HepG2 (cell line): ENCODE measurements at regions of chr2 and their contacts with region 1.

Region 1: GRCh38 chr2:80132281-80132680 is 172.3 kb downstream of the LRRTM1 start:
- DNase-seq: no peak
- ATAC-seq: no peak
- H3K4me3 ChIP-seq: no peak overlapping the region
- H3K27ac ChIP-seq: no peak overlapping the region
- H3K4me1 ChIP-seq: no peaks in the 10 kb centered on the region
- H3K27me3 ChIP-seq: no peaks in the 10 kb centered on the region; a peak in 1 of 5 replicates
- CTCF ChIP-seq: no peak
- EP300 ChIP-seq: no peak
- POLR2A ChIP-seq: no peak
- RAD21 ChIP-seq: no peak

Region 2: GRCh38 chr2:79971807-79972206 is 160.5 kb before region 1 on chr2:
- CTCF ChIA-PET with region 1: no interaction called
- POLR2A ChIA-PET with region 1: no interaction called
- in situ Hi-C with region 1: no loop called
- intact Hi-C with region 1: no loop called
- DNase-seq: no peak
- ATAC-seq: no peak
- H3K4me3 ChIP-seq: no peak overlapping the region
- H3K27ac ChIP-seq: no peak overlapping the region
- H3K4me1 ChIP-seq: no peaks in the 10 kb centered on the region
- H3K27me3 ChIP-seq: no peaks in the 10 kb centered on the region
- CTCF ChIP-seq: no peak
- EP300 ChIP-seq: no peak
- POLR2A ChIP-seq: no peak
- RAD21 ChIP-seq: no peak

Region 3: DNA sequence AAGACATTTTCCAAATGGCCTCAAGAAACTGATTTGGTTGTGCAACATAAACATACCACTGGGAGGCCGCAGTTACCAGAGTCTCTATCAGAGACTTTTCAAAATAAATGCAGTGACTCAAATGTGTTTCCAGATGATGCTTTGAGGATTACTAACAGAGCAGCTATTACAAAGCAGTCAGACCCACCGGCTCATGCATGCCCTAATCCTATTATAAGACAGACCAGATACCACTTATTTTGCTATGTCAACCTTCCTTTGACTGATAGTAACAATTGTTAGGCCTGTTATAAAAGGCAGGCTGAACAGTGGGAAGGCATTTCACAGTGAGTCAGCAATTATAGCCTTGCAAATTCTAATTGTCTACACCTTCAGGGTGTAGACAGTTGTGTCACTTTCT is 45.5 kb before region 1 on chr2:
- CTCF ChIA-PET with region 1: no interaction called
- POLR2A ChIA-PET with region 1: no interaction called
- in situ Hi-C with region 1: no loop called
- intact Hi-C with region 1: no loop called
- DNase-seq: no peak
- ATAC-seq: no peak
- H3K4me3 ChIP-seq: no peak overlapping the region
- H3K27ac ChIP-seq: no peak overlapping the region
- H3K4me1 ChIP-seq: no peaks in the 10 kb centered on the region
- H3K27me3 ChIP-seq: no peaks in the 10 kb centered on the region
- CTCF ChIP-seq: no peak
- EP300 ChIP-seq: no peak
- POLR2A ChIP-seq: no peak
- RAD21 ChIP-seq: no peak

Region 4: DNA sequence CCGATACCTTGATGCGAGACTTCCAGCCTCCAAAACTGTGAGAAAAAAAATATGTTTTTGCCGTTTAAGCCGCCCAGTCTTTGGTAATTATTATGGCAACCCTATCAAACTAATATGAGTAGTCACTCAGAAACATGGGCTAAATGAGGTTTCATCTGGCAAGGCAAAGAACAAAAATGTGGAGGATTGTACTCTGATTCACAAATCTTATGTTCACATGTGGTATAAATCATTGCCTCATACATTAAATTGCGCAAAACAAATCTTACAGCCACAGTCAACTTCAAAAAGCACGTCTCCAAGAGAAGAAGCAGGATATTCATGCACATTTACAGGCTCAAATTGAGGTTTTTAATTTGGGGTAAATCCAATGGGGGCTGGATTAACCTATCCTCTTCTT is 1607.7 kb after region 1 on chr2:
- CTCF ChIA-PET with region 1: no interaction called
- POLR2A ChIA-PET with region 1: no interaction called
- in situ Hi-C with region 1: no loop called
- intact Hi-C with region 1: loop called (anchors 5 kb)
- DNase-seq: no peak
- ATAC-seq: no peak
- H3K4me3 ChIP-seq: no peak overlapping the region
- H3K27ac ChIP-seq: no peak overlapping the region
- H3K4me1 ChIP-seq: no peaks in the 10 kb centered on the region
- H3K27me3 ChIP-seq: no peaks in the 10 kb centered on the region
- CTCF ChIP-seq: no peak
- EP300 ChIP-seq: no peak
- POLR2A ChIP-seq: no peak
- RAD21 ChIP-seq: no peak